Prostate gland (tissue), 2 donors: ENCODE measurements at regions of chr10 and their contacts with region 1.

Region 1: GRCh38 chr10:4093438-4093837 is 308.4 kb upstream of the KLF6 start:
- DNase-seq: no peak
- H3K4me3 ChIP-seq: no peak overlapping the region
- H3K27ac ChIP-seq: no peak overlapping the region
- H3K4me1 ChIP-seq: no peaks in the 10 kb centered on the region
- H3K27me3 ChIP-seq: no peaks in the 10 kb centered on the region
- CTCF ChIP-seq: no peak
- POLR2A ChIP-seq: no peak

Region 2: DNA sequence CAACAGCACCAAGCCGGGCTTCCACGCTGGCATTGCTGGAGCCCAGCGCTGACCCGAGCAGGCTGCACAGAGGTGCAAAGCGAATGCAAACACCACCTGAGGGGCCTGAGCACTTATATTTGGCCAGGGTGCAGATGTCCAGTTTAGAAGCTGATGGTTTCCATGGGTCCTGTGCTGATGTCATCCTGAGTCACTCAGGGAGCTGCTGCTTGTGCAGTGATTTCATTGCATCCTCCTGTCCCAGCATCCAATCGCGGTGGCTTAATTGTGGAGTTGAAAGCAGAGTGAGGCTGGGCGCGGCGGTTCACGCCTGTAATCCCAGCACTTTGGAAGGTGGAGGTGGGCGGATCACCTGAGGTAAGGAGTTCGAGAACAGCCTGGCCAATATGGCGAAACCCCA is 101.8 kb after region 1 on chr10:
- intact Hi-C with region 1: loop called (anchors 10 kb)
- DNase-seq: no peak
- H3K4me3 ChIP-seq: no peak overlapping the region
- H3K27ac ChIP-seq: no peak overlapping the region
- H3K4me1 ChIP-seq: no peaks in the 10 kb centered on the region
- H3K27me3 ChIP-seq: no peaks in the 10 kb centered on the region
- CTCF ChIP-seq: no peak
- POLR2A ChIP-seq: no peak